Dendritic cell treated with granulocyte-macrophage colony-stimulating factor and Interleukin-4, amounts not matched to agents 40 ng/mL and 50 ng/mL, for 4 days (primary cell): ENCODE measurements at regions of chr16 and their contacts with region 1.

Region 1: DNA sequence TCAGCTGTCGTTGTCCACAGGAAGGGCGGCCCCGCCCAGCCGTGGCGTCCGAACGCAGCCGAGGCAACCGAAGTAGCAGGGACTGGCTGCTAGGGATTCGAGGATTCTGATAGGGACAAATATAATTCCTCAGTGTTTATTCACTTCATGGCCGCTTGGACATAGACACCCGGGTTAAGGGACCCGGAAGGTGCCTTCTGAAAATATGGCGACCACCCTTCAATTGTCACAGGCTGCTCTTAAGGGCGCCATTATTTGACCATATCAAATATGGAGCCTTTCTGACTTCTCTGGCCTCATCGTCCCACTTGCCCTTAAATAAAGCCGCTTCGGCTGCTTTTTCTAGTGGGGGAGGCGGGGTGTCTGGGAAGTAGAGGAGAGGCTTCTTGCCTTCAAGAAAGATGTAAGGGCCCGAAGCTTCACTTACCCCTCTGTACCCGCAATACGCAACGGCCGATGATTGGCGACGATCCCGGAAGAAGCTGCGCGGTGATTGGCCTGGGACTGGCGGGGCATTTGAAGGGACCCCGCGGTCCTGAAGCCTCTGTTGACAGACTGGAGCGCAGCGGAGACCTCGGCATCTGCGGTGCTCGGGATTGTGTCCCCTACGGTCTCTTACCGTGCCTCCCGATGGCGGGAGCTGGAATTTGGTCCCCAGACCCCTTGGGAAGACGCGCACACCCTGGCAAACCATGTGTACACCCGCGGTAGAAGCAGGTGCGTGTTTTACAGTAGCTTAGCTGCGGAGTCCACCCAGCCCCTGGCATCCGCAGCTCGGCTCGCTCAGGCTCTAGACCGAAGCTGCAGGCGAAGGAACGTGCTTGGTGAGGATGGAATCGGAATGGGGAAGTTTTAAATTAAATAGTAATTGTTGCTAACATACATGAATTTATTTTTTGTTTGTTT is at the start of gene ZNF688:
- H3K4me3 Mint-ChIP-seq: peak within 1 kb of the TSS; percentile 88
- H3K27ac Mint-ChIP-seq: peak within 1 kb of the TSS; percentile 93
- H3K4me1 Mint-ChIP-seq: peaks cover 66% of the 10 kb centered on the region
- H3K27me3 Mint-ChIP-seq: no peaks in the 10 kb centered on the region

Region 2: GRCh38 chr16:30526823-30527635 is 44.9 kb before region 1 on chr16:
- intact Hi-C with region 1: loop called (anchors 5 kb)
- H3K4me3 Mint-ChIP-seq: peak overlapping the region; percentile 76
- H3K27ac Mint-ChIP-seq: peak overlapping the region; percentile 99
- H3K4me1 Mint-ChIP-seq: peaks cover 67% of the 10 kb centered on the region
- H3K27me3 Mint-ChIP-seq: no peaks in the 10 kb centered on the region

Region 3: GRCh38 chr16:30585400-30586189 is 13.6 kb after region 1 on chr16 and contains the start of gene ZNF785:
- intact Hi-C with region 1: loop called (anchors 1 kb)
- H3K4me3 Mint-ChIP-seq: peak within 1 kb of the TSS; percentile 92
- H3K27ac Mint-ChIP-seq: peak within 1 kb of the TSS; percentile 85
- H3K4me1 Mint-ChIP-seq: peaks cover 32% of the 10 kb centered on the region
- H3K27me3 Mint-ChIP-seq: no peaks in the 10 kb centered on the region